ENCODE measurements at regions of chr1 and their contacts with region 1.

Region 1: DNA sequence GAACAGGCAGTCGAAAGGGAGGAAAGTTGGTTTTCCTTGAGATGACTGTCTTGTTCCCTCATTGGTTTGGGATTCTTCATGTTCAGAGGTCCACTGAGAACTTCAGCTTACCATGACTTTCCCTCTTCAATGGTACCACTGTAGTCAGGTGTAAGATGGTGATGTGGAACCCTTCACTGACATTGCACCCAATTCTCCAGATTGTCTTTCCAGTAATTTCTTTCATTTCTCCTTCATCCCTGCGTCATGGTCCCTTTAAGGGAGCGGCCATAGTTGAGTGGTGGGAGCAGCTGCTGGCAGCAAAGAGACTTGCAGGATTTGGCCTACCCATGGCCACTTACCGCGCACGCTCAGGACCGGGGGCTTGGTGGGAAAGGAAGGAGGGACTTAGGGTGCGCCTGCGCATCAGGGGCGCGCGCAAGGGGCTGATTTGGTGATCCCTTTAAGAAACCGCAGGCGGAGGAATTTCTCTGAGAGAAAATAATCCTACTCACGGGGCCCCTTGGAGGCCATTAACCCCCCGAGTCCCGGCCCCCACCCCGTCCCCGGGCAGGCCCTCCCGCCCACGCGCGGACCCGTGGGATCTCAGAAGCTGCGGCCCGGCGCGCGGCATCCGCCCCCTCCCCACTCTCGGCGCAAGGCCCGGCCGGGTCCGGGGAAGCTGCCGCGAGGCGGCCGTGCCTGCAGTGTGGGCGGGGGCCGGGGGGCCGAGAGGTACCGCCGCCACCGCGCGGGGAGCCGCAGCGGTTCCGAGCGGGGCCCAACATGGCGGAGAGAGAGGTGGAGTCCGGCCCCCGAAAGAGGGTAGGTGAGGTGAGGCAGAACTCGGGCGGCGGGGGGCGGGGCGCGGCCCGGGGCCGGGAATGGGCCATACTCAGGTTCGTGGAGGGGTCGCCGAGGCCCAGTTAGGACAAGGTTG is at the start of gene ZMYM4:
- DNase-seq: peak; percentile 94
- ATAC-seq: peak; percentile 98
- H3K4me3 Mint-ChIP-seq: peak within 1 kb of the TSS; percentile 76
- H3K27ac Mint-ChIP-seq: peak within 1 kb of the TSS; percentile 83
- H3K4me1 Mint-ChIP-seq: peaks cover 30% of the 10 kb centered on the region
- H3K27me3 Mint-ChIP-seq: no peaks in the 10 kb centered on the region
- total RNA-seq, gene ZMYM4: 27.8 to 31.6 TPM

Region 2: GRCh38 chr1:34852677-34853217 is 415.8 kb before region 1 on chr1:
- CTCF ChIA-PET with region 1: no interaction called
- POLR2A ChIA-PET with region 1: no interaction called
- intact Hi-C with region 1: loop called in 1 of 2 experiments (anchors 2 kb)
- DNase-seq: peak; percentile 95
- ATAC-seq: peak; percentile 100
- H3K4me3 Mint-ChIP-seq: no peak overlapping the region
- H3K27ac Mint-ChIP-seq: peak overlapping the region; percentile 34
- H3K4me1 Mint-ChIP-seq: peaks cover 17% of the 10 kb centered on the region
- H3K27me3 Mint-ChIP-seq: no peaks in the 10 kb centered on the region

Region 3: GRCh38 chr1:34984793-34985608 is 283.5 kb before region 1 on chr1 and contains the start of gene TMEM35B:
- CTCF ChIA-PET with region 1: no interaction called
- POLR2A ChIA-PET with region 1: no interaction called
- intact Hi-C with region 1: loop called in 1 of 2 experiments (anchors 1 kb)
- DNase-seq: peak; percentile 88
- ATAC-seq: peak; percentile 94
- H3K4me3 Mint-ChIP-seq: peak within 1 kb of the TSS; percentile 93
- H3K27ac Mint-ChIP-seq: peak within 1 kb of the TSS; percentile 93
- H3K4me1 Mint-ChIP-seq: peaks cover 43% of the 10 kb centered on the region
- H3K27me3 Mint-ChIP-seq: no peaks in the 10 kb centered on the region
- total RNA-seq, gene TMEM35B: 15.8 to 19.0 TPM

Region 4: GRCh38 chr1:35079003-35079930 is 189.3 kb before region 1 on chr1 and contains the start of gene ZMYM1:
- CTCF ChIA-PET with region 1: no interaction called
- POLR2A ChIA-PET with region 1: no interaction called
- intact Hi-C with region 1: loop called in 1 of 2 experiments (anchors 1 kb)
- DNase-seq: peak; percentile 95
- ATAC-seq: peak; percentile 97
- H3K4me3 Mint-ChIP-seq: peak within 1 kb of the TSS; percentile 88
- H3K27ac Mint-ChIP-seq: peak within 1 kb of the TSS; percentile 97
- H3K4me1 Mint-ChIP-seq: peaks cover 36% of the 10 kb centered on the region
- H3K27me3 Mint-ChIP-seq: peaks cover 5% of the 10 kb centered on the region
- total RNA-seq, gene ZMYM1: 3.3 to 5.7 TPM

Region 5: DNA sequence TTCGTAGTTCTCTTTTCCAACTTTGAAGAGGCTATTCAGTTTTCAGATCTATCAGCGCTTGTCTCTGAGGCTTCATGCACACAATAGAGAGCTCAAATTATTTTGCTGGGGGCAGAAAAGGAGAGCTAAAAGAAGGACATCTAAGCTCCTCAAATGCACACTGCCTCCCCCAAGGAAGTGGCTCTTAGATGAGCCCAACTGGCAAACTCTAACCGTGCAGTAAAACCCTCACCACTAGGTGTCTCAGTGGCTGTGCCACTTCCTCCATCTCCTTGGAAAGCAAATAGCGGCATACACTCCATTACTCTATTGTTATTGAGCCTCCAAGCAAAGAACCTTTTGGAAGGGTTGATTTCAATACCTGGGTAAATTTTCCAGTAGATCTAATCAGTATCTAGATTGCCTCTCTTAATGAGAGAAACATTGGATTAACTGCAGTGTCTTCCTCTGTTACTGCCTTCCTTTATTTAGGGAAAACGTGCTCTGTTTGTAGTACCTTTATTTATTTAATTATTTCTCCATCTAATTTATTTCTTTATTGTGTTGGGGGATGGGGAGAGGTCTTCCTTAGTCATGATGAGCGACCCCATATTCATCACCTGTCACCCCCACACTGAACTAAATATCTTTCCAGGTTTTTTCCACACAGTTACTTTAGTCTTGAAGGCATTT is 66.4 kb before region 1 on chr1:
- CTCF ChIA-PET with region 1: interaction called, 3 read pairs
- POLR2A ChIA-PET with region 1: no interaction called
- intact Hi-C with region 1: loop called in 1 of 2 experiments (anchors 2 kb)
- DNase-seq: peak; percentile 80
- ATAC-seq: peak; percentile 100
- H3K4me3 Mint-ChIP-seq: no peak overlapping the region
- H3K27ac Mint-ChIP-seq: no peak overlapping the region
- H3K4me1 Mint-ChIP-seq: peaks cover 5% of the 10 kb centered on the region
- H3K27me3 Mint-ChIP-seq: no peaks in the 10 kb centered on the region

Region 6: DNA sequence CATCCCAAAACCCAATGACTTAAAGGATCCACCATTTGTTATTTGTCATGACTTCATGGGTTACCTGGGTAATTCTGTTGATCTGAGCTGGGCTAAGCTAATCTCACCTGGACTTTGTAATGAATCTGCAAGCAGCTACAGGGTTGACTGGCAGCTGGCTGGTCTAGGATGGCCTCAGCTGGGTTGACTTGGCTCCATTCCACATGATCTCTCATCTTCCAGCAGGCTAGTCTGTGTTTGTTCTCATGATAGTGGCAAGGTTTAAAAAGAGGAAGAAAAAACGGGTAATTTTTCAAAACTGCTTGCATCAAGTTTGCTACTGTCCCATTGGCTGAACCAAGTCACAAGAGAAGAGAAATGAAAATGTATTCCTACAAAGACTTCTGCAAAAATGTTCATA is 24.9 kb before region 1 on chr1:
- CTCF ChIA-PET with region 1: no interaction called
- POLR2A ChIA-PET with region 1: no interaction called
- intact Hi-C with region 1: no loop called
- DNase-seq: no peak
- ATAC-seq: no peak
- H3K4me3 Mint-ChIP-seq: no peak overlapping the region
- H3K27ac Mint-ChIP-seq: no peak overlapping the region
- H3K4me1 Mint-ChIP-seq: no peaks in the 10 kb centered on the region
- H3K27me3 Mint-ChIP-seq: no peaks in the 10 kb centered on the region

Region 7: DNA sequence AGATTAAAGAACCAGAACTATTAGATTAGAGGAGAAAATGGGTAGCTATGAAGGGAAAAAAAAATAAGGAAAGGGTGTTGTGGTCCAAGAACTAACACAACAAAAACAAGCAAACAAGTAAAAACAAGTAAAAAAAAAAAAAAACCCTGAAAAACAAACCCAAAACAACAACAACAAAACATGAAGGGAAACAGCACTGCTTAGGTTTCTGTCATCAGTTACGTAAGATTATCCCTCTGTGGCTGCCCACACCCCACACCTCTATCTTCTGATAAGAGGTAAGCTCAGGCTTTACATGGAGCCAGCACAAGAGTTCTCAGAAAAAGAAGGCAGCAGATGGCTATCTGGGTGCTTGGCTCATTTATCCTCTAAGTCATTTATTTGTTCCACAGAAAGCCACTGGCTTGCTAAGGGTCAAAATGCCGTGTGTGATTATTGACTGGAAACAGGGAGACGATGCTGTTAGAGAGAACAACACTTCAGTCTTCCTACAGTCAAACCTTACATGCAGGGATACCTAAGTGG is 231.2 kb after region 1 on chr1:
- CTCF ChIA-PET with region 1: no interaction called
- POLR2A ChIA-PET with region 1: no interaction called
- intact Hi-C with region 1: no loop called
- DNase-seq: peak; percentile 30
- ATAC-seq: no peak
- H3K4me3 Mint-ChIP-seq: no peak overlapping the region
- H3K27ac Mint-ChIP-seq: no peak overlapping the region
- H3K4me1 Mint-ChIP-seq: peaks cover 29% of the 10 kb centered on the region
- H3K27me3 Mint-ChIP-seq: no peaks in the 10 kb centered on the region

Region 8: DNA sequence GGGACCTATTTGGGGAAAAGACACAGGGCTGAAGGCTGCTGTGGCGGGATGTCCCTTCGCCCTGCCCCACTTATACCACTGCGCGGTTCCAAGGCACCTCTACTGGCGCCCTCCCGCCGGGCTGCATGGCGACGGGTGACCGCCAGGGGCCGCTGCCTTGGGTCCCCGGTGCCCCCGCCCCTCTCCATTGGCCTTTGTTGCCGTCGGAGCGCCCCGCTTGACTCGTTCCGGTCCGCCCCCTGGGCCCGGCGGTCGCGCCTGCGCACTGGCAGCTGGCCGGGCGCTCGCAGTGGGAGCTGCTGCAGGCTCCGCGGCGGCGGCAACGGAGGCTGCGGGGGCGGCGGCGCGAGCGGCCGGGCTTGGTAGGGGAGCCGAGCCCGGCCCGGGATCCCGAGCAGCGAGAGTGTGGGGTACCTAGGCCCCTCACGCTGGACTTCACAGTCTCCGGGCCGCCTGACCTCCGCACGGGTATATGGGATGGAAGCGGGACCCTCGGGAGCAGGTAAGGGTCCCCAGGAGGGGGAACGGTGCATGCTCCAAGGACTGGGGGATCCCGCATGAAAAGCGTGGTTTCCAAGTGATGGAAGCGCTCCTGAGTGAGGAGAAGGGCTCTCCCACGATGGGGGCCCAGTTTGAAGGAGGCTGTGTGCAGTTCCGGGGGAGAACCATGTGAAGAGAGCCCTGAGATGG is 614.5 kb after region 1 on chr1 and contains the start of gene AGO1:
- CTCF ChIA-PET with region 1: no interaction called
- POLR2A ChIA-PET with region 1: no interaction called
- intact Hi-C with region 1: loop called in 1 of 2 experiments (anchors 1 kb)
- DNase-seq: peak; percentile 98
- ATAC-seq: peak; percentile 95
- H3K4me3 Mint-ChIP-seq: peak within 1 kb of the TSS; percentile 91
- H3K27ac Mint-ChIP-seq: peak within 1 kb of the TSS; percentile 73
- H3K4me1 Mint-ChIP-seq: peaks cover 46% of the 10 kb centered on the region
- H3K27me3 Mint-ChIP-seq: no peaks in the 10 kb centered on the region
- total RNA-seq, gene AGO1: 31.5 to 34.6 TPM

Region 9: GRCh38 chr1:36023098-36023769 is 754.7 kb after region 1 on chr1:
- CTCF ChIA-PET with region 1: no interaction called
- POLR2A ChIA-PET with region 1: no interaction called
- intact Hi-C with region 1: no loop called
- DNase-seq: peak; percentile 10
- ATAC-seq: peak; percentile 92
- H3K4me3 Mint-ChIP-seq: no peak overlapping the region
- H3K27ac Mint-ChIP-seq: peak overlapping the region; percentile 92
- H3K4me1 Mint-ChIP-seq: peaks cover 16% of the 10 kb centered on the region
- H3K27me3 Mint-ChIP-seq: no peaks in the 10 kb centered on the region